OCI-LY7 (cell line): ENCODE measurements at regions of chr4 and their contacts with region 1.

Region 1: GRCh38 chr4:152500800-152501434 is 35.0 kb downstream of the FBXW7 start:
- DNase-seq: peak; percentile 90
- H3K4me3 ChIP-seq: peak overlapping the region; percentile 17
- H3K27ac ChIP-seq: peak overlapping the region; percentile 19
- H3K4me1 ChIP-seq: peaks cover 36% of the 10 kb centered on the region
- CTCF ChIP-seq: peak; percentile 99

Region 2: GRCh38 chr4:152454398-152455011 is 46.4 kb before region 1 on chr4:
- CTCF ChIA-PET with region 1: interaction called, 3 read pairs
- POLR2A ChIA-PET with region 1: interaction called, 14 read pairs
- intact Hi-C with region 1: loop called (anchors 2 kb)
- DNase-seq: peak; percentile 47
- H3K4me3 ChIP-seq: no peak overlapping the region
- H3K27ac ChIP-seq: no peak overlapping the region
- H3K4me1 ChIP-seq: peaks cover 35% of the 10 kb centered on the region
- CTCF ChIP-seq: peak; percentile 95

Region 3: GRCh38 chr4:152471251-152471792 is 29.6 kb before region 1 on chr4:
- CTCF ChIA-PET with region 1: no interaction called
- POLR2A ChIA-PET with region 1: interaction called, 16 read pairs
- intact Hi-C with region 1: no loop called
- DNase-seq: no peak
- H3K4me3 ChIP-seq: no peak overlapping the region
- H3K27ac ChIP-seq: no peak overlapping the region
- H3K4me1 ChIP-seq: no peaks in the 10 kb centered on the region
- CTCF ChIP-seq: no peak

Region 4: DNA sequence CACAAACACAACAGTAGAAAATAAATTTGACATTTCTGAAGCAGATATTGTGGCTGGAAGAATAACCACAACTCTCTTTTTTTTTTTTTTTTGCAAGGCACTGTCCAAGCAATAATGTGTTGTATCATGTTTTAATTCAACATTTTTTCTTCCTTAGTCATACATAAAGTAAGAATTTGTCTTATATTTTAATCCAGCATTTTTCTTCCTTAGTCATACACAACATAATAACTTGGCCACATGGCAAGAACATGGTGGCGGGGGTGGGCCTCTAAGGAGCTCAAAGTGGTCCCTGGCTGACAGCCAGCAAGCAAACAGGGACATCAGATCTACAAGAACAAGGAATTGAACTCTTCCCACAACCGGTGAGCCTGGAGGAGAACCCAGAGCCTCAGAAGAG is 14.8 kb after region 1 on chr4:
- CTCF ChIA-PET with region 1: no interaction called
- POLR2A ChIA-PET with region 1: interaction called, 22 read pairs
- intact Hi-C with region 1: no loop called
- DNase-seq: no peak
- H3K4me3 ChIP-seq: no peak overlapping the region
- H3K27ac ChIP-seq: no peak overlapping the region
- H3K4me1 ChIP-seq: peaks cover 14% of the 10 kb centered on the region
- CTCF ChIP-seq: no peak

Region 5: GRCh38 chr4:152535903-152536544 is 35.1 kb after region 1 on chr4 and contains the start of gene FBXW7:
- CTCF ChIA-PET with region 1: no interaction called
- POLR2A ChIA-PET with region 1: interaction called, 32 read pairs
- intact Hi-C with region 1: loop called (anchors 2 kb)
- DNase-seq: peak; percentile 99
- H3K4me3 ChIP-seq: peak within 1 kb of the TSS; percentile 84
- H3K27ac ChIP-seq: peak within 1 kb of the TSS; percentile 90
- H3K4me1 ChIP-seq: peaks cover 48% of the 10 kb centered on the region
- CTCF ChIP-seq: no peak
- total RNA-seq, gene FBXW7: 58.8 and 97.7 TPM in 2 replicates

Region 6: DNA sequence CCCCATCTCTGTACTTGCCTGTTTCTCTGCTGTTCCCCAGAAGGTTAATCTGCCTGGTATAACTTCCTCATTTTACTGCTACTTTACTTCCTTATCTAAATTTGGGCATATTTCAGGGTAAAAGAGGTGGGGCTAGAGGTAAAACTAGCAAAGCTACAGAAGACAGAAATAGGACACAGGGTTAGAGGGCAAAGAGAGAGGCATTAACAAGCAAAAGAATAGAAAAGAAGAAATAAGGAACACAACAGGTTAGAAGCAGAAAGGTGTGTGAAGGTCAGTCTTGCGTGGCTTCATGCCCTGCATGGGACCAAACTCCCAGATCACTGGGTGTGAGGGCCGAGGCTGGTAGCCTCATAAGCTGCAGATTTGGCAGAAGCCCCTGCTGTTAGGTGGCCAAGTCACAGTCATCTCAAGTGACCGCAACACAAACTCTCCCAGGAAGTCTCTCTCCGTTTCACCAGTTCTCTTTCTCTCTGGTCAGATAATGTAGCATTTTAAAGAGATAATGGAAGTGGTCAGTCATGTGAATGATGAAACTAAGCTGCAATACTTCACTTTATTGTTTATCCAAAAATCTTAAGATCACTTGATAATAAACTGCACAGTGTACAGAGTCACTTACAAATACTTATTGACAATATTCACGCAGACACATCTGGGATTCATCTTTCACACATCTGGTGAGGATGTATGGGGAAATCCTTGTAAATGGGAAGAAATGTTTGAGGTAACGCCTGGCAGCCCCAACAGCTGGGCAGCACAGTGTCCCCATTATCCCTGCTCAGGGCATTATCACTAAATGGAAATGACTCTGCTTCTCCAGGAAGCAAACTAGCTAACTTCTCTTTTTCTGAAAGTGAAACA is 162.5 kb after region 1 on chr4:
- CTCF ChIA-PET with region 1: no interaction called
- POLR2A ChIA-PET with region 1: interaction called, 15 read pairs
- intact Hi-C with region 1: no loop called
- DNase-seq: peak; percentile 90
- H3K4me3 ChIP-seq: peak overlapping the region; percentile 78
- H3K27ac ChIP-seq: peak overlapping the region; percentile 98
- H3K4me1 ChIP-seq: peaks cover 86% of the 10 kb centered on the region
- CTCF ChIP-seq: no peak